Dendritic cell treated with granulocyte-macrophage colony-stimulating factor and Interleukin-4, amounts not matched to agents 40 ng/mL and 50 ng/mL, for 4 days (primary cell): ENCODE measurements at regions of chr5 and their contacts with region 1.

Region 1: GRCh38 chr5:139341650-139342422 is at the start of gene PAIP2:
- H3K4me3 Mint-ChIP-seq: peak within 1 kb of the TSS; percentile 97
- H3K27ac Mint-ChIP-seq: peak within 1 kb of the TSS; percentile 96
- H3K4me1 Mint-ChIP-seq: peaks cover 47% of the 10 kb centered on the region
- H3K27me3 Mint-ChIP-seq: no peaks in the 10 kb centered on the region

Region 2: GRCh38 chr5:139004374-139005307 is 337.2 kb before region 1 on chr5:
- intact Hi-C with region 1: no loop called
- H3K4me3 Mint-ChIP-seq: no peak overlapping the region
- H3K27ac Mint-ChIP-seq: no peak overlapping the region
- H3K4me1 Mint-ChIP-seq: no peaks in the 10 kb centered on the region
- H3K27me3 Mint-ChIP-seq: no peaks in the 10 kb centered on the region

Region 3: GRCh38 chr5:139293504-139294373 is 48.1 kb before region 1 on chr5 and contains the start of gene MATR3:
- intact Hi-C with region 1: loop called (anchors 2 kb)
- H3K4me3 Mint-ChIP-seq: peak within 1 kb of the TSS; percentile 93
- H3K27ac Mint-ChIP-seq: peak within 1 kb of the TSS; percentile 97
- H3K4me1 Mint-ChIP-seq: peaks cover 39% of the 10 kb centered on the region
- H3K27me3 Mint-ChIP-seq: no peaks in the 10 kb centered on the region

Region 4: DNA sequence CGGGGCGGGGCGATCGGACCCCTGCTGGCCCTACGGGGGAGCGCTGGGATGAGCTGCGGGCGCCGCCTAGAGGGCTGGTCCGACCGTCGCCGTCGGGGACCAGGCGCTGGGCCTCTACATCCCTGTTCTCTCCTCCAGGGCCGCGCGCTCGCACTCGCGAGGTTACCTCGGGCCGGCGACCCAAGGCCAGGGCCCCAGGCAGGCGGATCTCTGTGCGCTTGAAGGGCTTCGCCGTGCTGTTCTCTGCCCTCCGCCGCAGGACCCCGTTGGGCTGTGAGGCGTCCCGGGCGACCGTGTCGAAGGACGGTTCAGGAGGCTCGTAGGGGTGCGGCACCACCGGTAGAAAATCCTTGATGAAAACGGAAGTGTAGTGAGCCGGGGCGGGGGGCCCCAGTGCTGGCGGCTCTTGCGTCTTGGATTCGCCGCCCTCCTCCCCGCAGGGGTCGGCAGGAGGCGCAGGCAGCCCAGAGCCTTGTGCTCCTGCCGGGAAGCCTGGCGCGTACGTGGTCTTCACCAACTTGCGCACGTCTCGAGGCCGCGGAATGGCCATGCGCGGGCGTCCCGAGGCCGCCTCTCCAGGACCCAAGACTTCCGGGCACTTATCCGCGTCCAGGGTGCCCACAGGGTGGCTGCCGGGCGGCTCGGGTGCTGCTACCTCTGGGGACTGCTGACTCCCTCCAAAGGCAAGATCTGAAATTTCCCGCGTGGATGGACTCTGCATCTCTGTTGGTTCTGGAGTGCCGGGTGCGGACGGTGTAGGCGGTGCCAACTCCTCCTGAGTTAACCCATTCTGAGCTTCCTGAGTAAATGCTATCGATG is 51.1 kb after region 1 on chr5:
- intact Hi-C with region 1: loop called (anchors 5 kb)
- H3K4me3 Mint-ChIP-seq: peak overlapping the region; percentile 80
- H3K27ac Mint-ChIP-seq: peak overlapping the region; percentile 80
- H3K4me1 Mint-ChIP-seq: peaks cover 56% of the 10 kb centered on the region
- H3K27me3 Mint-ChIP-seq: peaks cover 75% of the 10 kb centered on the region